Ascending aorta (tissue), 2 donors: ENCODE measurements at regions of chr1 and their contacts with region 1.

Region 1: GRCh38 chr1:183471743-183472487 is 384 bp upstream of the SMG7 start:
- DNase-seq: peak; percentile 93 to 99
- H3K4me3 ChIP-seq: peak overlapping the region; percentile 64 to 95
- H3K27ac ChIP-seq: peak overlapping the region; percentile 88 to 89
- H3K4me1 ChIP-seq: peaks cover 5 to 12% of the 10 kb centered on the region in 2 donors
- H3K27me3 ChIP-seq: no peaks in the 10 kb centered on the region
- CTCF ChIP-seq: no peak

Region 2: GRCh38 chr1:182614796-182615454 is 857.0 kb before region 1 on chr1:
- intact Hi-C with region 1: loop called (anchors 5 kb)
- DNase-seq: peak; percentile 73 to 93
- H3K4me3 ChIP-seq: peak overlapping the region; percentile 55 to 61
- H3K27ac ChIP-seq: peak overlapping the region; percentile 93 to 96
- H3K4me1 ChIP-seq: peaks cover 23 to 36% of the 10 kb centered on the region in 2 donors
- H3K27me3 ChIP-seq: no peaks in the 10 kb centered on the region
- CTCF ChIP-seq: no peak

Region 3: GRCh38 chr1:183023601-183024316 is 448.2 kb before region 1 on chr1:
- intact Hi-C with region 1: loop called (anchors 5 kb)
- DNase-seq: peak in 1 of 2 donors; percentile 82
- H3K4me3 ChIP-seq: peak overlapping the region; percentile 87 to 100
- H3K27ac ChIP-seq: peak overlapping the region; percentile 100
- H3K4me1 ChIP-seq: peaks cover 0 to 20% of the 10 kb centered on the region in 2 donors
- H3K27me3 ChIP-seq: no peaks in the 10 kb centered on the region
- CTCF ChIP-seq: peak; percentile 26 to 51 (median 35)

Region 4: GRCh38 chr1:183058851-183059502 is 412.9 kb before region 1 on chr1:
- intact Hi-C with region 1: no loop called
- DNase-seq: no peak
- H3K4me3 ChIP-seq: no peak overlapping the region
- H3K27ac ChIP-seq: peak overlapping the region in 1 of 2 donors; percentile 9
- H3K4me1 ChIP-seq: peaks cover 0 to 36% of the 10 kb centered on the region in 2 donors
- H3K27me3 ChIP-seq: no peaks in the 10 kb centered on the region
- CTCF ChIP-seq: no peak

Region 5: GRCh38 chr1:183416850-183417771 is 54.8 kb before region 1 on chr1:
- intact Hi-C with region 1: no loop called
- DNase-seq: peak in 1 of 2 donors; percentile 74
- H3K4me3 ChIP-seq: peak overlapping the region; percentile 50 to 60
- H3K27ac ChIP-seq: no peak overlapping the region
- H3K4me1 ChIP-seq: peaks cover 5 to 13% of the 10 kb centered on the region in 2 donors
- H3K27me3 ChIP-seq: peaks cover 10% of the 10 kb centered on the region
- CTCF ChIP-seq: no peak

Region 6: DNA sequence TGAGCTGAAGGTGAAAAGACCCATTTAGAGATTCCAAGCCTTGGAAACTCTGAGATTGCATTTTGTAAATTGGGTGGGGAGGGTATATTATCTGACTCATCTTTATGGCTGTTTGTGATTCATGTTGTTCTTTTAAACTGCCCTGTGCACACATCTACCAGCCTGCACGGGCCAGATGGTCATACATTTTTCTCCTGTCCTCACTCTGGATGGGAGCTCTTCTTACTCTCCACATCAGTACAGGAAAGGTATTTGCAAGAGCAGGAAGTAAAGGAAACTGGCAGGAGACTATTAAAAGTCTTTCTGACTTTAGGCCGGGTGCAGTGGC is 39.4 kb before region 1 on chr1:
- intact Hi-C with region 1: no loop called
- DNase-seq: no peak
- H3K4me3 ChIP-seq: no peak overlapping the region
- H3K27ac ChIP-seq: no peak overlapping the region
- H3K4me1 ChIP-seq: no peaks in the 10 kb centered on the region
- H3K27me3 ChIP-seq: no peaks in the 10 kb centered on the region
- CTCF ChIP-seq: no peak

Region 7: DNA sequence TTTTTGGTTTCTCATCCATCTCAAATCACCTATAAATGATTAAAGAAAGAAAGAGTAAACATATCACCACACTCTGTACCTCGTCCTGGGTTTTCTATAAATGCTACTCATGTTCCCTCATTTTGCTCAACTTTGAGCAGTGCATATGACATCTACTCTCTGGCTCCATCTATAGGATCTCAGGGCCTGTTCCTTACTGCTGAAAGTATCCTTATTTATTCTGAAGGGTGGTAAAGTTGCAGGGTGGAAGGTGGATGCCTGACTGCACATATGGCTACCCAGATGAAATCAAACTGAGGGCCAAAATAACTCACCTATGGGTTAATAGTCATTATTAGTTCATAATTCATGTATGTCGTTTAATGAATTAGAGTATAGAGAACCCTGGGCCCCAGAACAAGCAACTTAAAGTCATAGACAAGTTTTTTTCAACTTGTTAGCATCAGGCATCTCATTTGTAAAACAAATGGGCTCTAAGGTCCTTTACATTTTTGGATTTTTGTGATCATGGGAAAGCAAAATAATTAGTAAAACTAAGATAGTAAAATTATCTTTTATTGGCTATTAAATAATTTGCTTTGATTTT is 71.8 kb after region 1 on chr1:
- intact Hi-C with region 1: loop called (anchors 1 kb)
- DNase-seq: no peak
- H3K4me3 ChIP-seq: no peak overlapping the region
- H3K27ac ChIP-seq: no peak overlapping the region
- H3K4me1 ChIP-seq: no peaks in the 10 kb centered on the region
- H3K27me3 ChIP-seq: no peaks in the 10 kb centered on the region
- CTCF ChIP-seq: peak in 2 of 3 experiments; percentile 48 to 56

Region 8: GRCh38 chr1:183915625-183916510 is 444.0 kb after region 1 on chr1:
- intact Hi-C with region 1: loop called (anchors 10 kb)
- DNase-seq: peak; percentile 30 to 85
- H3K4me3 ChIP-seq: peak overlapping the region in 1 of 2 donors; percentile 24
- H3K27ac ChIP-seq: peak overlapping the region; percentile 30 to 35
- H3K4me1 ChIP-seq: peaks cover 0 to 4% of the 10 kb centered on the region in 2 donors
- H3K27me3 ChIP-seq: no peaks in the 10 kb centered on the region
- CTCF ChIP-seq: peak; percentile 82 to 90 (median 86)